HAP-1 (cell line): ENCODE measurements at regions of chr4 and their contacts with region 1.

Region 1: GRCh38 chr4:168923526-168924194 is 86.4 kb downstream of the CBR4 start:
- DNase-seq: peak; percentile 80 to 81
- H3K4me3 ChIP-seq: no peak overlapping the region
- H3K4me1 ChIP-seq: peaks cover 25% of the 10 kb centered on the region
- H3K27me3 ChIP-seq: no peaks in the 10 kb centered on the region

Region 2: DNA sequence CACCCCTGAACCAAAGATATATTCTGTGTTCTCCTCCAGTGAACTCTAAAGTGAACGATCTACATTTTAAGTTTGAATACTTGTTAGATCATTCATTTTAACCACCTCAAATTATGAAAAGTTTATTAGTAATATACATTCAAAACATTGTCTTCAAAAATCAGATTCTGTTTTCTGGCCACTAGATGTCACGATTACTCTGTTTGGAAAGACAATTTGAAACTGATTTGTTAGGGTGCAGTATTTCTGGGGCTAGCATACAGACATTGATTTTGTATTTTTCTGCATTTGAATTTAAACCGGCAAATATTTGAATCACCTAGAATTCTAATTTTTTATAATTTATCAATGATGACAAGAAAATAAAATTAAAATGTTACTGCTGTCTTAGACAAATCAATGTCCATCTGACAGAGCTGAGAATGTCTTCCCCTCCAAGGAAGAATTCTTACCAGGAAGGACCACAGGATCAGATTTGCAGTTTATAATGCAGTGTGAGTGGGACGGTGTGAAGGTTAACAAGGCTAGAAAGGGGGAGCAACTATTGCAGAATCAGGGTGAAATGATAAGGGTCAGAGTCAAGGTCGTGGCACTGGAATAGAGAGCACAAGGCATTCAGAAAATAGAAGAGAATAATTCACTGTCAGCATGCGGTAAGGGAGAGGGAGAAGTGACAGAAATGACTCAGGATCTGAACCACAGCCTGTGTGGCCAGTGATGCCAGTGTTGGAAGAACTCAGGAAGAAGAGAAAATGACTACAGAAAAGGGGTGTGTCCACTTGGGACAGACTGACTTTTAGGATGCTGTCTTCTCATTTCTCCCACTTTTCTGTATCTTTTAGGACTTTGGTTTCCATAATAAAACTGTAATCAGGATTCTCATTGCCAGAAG is 739.7 kb before region 1 on chr4:
- in situ Hi-C with region 1: loop called (anchors 10 kb)
- DNase-seq: peak in 1 of 2 experiments; percentile 19
- H3K4me3 ChIP-seq: no peak overlapping the region
- H3K4me1 ChIP-seq: no peaks in the 10 kb centered on the region
- H3K27me3 ChIP-seq: no peaks in the 10 kb centered on the region; the same call in 1 of the 2 replicates

Region 3: DNA sequence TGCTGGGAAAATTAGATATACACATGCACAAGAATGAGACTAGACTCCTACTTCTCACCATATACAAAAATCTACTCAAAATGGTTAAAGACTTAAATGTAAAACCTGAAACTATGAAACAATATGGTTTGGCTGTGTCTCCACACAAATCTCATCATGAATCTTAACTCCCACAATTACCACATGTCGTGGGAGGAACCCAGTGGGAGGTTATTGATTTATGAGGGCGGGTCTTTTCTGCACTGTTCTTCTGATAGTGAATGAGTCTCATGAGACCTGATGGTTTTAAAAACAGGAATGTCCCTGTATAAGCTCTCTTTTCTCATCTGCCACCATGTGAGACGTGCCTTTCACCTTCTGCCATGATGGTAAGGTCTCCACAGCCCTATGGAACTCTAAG is 556.6 kb before region 1 on chr4:
- in situ Hi-C with region 1: no loop called
- DNase-seq: no peak
- H3K4me3 ChIP-seq: no peak overlapping the region
- H3K4me1 ChIP-seq: no peaks in the 10 kb centered on the region
- H3K27me3 ChIP-seq: no peaks in the 10 kb centered on the region

Region 4: GRCh38 chr4:168585168-168586091 is 338.2 kb before region 1 on chr4:
- in situ Hi-C with region 1: loop called (anchors 25 kb)
- DNase-seq: peak; percentile 83 to 89
- H3K4me3 ChIP-seq: no peak overlapping the region
- H3K4me1 ChIP-seq: 0 out of 2 replicates have a peak, but pooled peaks cover 2% of the 10 kb centered on the region
- H3K27me3 ChIP-seq: no peaks in the 10 kb centered on the region

Region 5: GRCh38 chr4:168710353-168710946 is 213.2 kb before region 1 on chr4:
- in situ Hi-C with region 1: loop called (anchors 10 kb)
- DNase-seq: peak; percentile 56 to 82
- H3K4me3 ChIP-seq: no peak overlapping the region
- H3K4me1 ChIP-seq: peaks cover 13% of the 10 kb centered on the region
- H3K27me3 ChIP-seq: no peaks in the 10 kb centered on the region

Region 6: DNA sequence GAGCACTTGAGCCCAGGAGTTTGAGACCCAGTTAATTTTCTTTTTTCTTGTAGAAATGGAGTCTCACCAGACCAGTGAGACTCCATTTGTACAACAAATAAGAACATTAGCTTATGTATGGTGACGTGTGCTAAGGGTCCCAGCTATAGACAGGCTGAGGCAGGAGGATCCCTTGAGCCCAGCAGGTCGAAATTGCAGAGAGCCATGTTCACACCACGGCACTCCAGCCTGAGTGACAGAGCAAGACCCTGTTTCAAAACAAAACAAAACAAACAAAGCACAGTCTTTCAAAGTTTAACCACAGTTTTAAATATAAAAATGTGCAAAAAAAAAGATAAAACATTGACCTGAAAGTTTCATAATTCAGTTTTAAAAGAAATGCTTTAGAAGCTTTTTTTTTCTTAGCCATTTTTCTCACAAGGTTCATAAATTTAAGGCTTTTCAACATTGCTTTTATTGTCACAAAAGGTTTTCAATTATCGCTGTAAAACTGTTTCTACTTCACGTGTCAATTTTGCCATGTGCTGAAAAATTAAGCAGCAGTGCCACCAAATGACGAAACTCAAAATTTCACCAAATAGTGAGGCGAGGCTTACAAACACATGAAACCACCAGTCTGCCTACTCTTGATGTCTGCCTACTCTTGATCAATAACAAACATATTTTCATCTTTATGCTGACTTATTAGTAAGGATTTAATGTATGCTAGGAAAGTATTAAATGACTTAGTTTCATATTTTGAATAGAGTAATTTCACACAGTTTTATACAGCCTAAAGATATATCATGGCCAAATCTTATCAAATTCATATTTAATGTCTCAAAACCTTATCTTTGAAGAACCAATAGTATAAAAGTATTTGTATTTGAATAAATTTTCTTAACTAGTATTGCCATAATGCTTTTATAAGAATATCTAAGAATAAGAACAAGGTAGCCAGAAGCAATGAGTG is 562.4 kb after region 1 on chr4:
- in situ Hi-C with region 1: loop called (anchors 10 kb)
- DNase-seq: peak; percentile 54 to 79
- H3K4me3 ChIP-seq: no peak overlapping the region
- H3K4me1 ChIP-seq: 0 out of 2 replicates have a peak, but pooled peaks cover 8% of the 10 kb centered on the region
- H3K27me3 ChIP-seq: no peaks in the 10 kb centered on the region